ENCODE measurements at regions of chr22 and their contacts with region 1.

Region 1: DNA sequence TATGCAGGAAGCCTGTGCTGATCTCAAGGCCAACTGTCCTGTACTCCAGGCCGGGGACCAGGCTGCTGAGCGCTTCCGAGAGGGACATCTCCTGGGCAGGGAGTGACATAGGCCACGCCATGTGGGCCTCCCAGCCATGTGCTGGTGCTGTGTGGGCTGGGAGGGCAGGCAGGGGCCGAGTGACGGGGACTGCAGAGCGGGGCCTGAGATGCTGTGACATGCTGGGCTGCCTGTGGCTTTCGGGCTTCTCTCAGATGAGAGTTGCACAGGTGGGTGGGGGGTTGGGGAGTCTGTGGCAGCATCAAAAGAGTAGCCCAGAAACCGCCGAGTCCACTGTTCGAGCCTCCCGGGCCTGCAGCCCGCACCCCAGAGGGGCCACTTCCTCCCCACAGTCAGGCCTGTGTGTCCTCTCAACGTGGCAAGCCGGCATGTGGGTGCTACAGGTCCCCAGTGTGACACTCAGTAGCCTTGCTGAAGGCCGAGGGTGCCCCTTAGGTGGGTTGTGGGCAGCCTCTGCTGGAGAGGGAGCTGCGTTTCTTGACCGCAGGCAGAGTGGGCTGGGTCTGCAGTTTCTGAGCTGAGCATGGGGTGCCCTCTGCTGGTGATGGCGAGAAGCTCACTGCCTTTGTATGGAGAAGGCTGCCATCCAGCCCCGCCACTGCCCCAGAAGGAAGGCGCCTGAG is 101.2 kb downstream of the BCR start:
- DNase-seq: peak; percentile 85
- H3K4me3 ChIP-seq: no peak overlapping the region
- H3K27ac ChIP-seq: peak overlapping the region; percentile 53 to 61
- H3K4me1 ChIP-seq: no peaks in the 10 kb centered on the region
- H3K27me3 ChIP-seq: no peaks in the 10 kb centered on the region
- CTCF ChIP-seq: peak; percentile 87 to 97 (median 96)
- POLR2A ChIP-seq: no peak

Region 2: GRCh38 chr22:23178512-23179254 is 102.9 kb before region 1 on chr22:
- intact Hi-C with region 1: loop called (anchors 1 kb)
- DNase-seq: peak; percentile 65 to 74
- H3K4me3 ChIP-seq: no peak overlapping the region
- H3K27ac ChIP-seq: peak overlapping the region; percentile 69 to 74
- H3K4me1 ChIP-seq: peaks cover 0 to 28% of the 10 kb centered on the region in 2 donors
- H3K27me3 ChIP-seq: no peaks in the 10 kb centered on the region
- CTCF ChIP-seq: peak; percentile 94 to 98 (median 96)
- POLR2A ChIP-seq: no peak

Region 3: DNA sequence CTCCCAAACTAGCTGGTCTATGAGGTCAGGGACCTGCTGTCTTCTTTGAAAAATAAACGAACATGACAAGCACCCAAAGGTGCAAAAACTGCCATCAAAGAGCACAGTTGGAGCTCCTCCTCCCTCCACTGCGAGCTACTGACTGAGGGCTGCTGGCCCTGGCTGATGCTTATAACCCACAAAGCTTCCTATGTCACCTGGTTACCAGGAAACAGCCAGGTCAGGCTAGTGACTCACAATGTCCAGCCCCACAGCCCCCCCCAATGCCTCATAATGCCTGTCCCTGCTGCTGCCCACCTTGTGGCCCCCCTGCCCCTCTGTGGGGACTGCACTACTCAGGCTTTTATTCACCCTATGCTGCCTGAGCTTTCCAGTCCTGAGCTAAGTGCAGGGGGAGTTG is 350.6 kb after region 1 on chr22 and contains the start of gene DRICH1:
- intact Hi-C with region 1: no loop called
- DNase-seq: no peak
- H3K4me3 ChIP-seq: no peak within 1 kb of the TSS
- H3K27ac ChIP-seq: no peak within 1 kb of the TSS
- H3K4me1 ChIP-seq: no peaks in the 10 kb centered on the region
- H3K27me3 ChIP-seq: no peaks in the 10 kb centered on the region
- CTCF ChIP-seq: no peak
- POLR2A ChIP-seq: no peak
- total RNA-seq, gene DRICH1: 1.4 TPM in 1 of 4 donors, not detected in the others

Measured in uterus (tissue), 4 donors.